Right lobe of liver (tissue), 6 donors: ENCODE measurements at regions of chr15 and their contacts with region 1.

Region 1: GRCh38 chr15:33699691-33700447 is 268.4 kb upstream of the CHRM5 start:
- DNase-seq: no peak
- ATAC-seq: no peak
- H3K4me3 ChIP-seq: no peak overlapping the region
- H3K27ac ChIP-seq: no peak overlapping the region
- H3K4me1 ChIP-seq: no peaks in the 10 kb centered on the region
- H3K27me3 ChIP-seq: no peaks in the 10 kb centered on the region
- CTCF ChIP-seq: peak in 1 of 4 donors; percentile 11
- POLR2A ChIP-seq: no peak

Region 2: DNA sequence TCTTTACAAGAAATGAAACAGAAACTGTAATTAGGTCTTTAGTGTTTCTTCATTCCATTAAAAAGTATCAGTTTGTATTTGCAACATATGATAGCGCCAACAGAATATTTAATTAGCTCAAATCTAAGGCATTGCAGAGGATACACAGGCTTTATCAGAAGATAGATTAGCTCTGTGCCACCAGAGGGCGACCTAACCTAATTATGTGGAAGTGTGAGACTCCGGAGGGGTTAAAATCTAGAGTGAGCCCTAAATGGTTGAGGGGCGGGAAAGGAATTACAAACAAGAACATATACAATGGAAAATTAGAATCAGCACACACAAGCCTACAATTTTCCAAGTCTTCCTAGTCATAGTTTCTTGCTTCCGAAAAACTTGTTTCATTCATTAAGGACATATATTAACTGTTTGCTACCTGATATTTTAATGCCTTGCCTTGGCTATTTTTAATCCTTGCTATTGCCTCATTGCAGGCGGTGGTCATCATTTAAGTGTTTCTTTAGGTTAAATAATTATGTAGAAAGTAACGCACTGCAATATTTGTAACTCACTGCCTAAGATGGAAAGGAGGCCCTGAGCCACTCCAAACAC is 407.1 kb before region 1 on chr15:
- intact Hi-C with region 1: loop called in 1 of 2 experiments (anchors 5 kb)
- DNase-seq: peak in 2 of 3 donors; percentile 56
- ATAC-seq: peak; percentile 70 to 80 (median 76)
- H3K4me3 ChIP-seq: no peak overlapping the region
- H3K27ac ChIP-seq: no peak overlapping the region
- H3K4me1 ChIP-seq: peaks cover 0 to 17% (median 0%) of the 10 kb centered on the region in 4 donors
- H3K27me3 ChIP-seq: no peaks in the 10 kb centered on the region
- CTCF ChIP-seq: peak; percentile 50 to 82 (median 74)
- POLR2A ChIP-seq: no peak

Region 3: DNA sequence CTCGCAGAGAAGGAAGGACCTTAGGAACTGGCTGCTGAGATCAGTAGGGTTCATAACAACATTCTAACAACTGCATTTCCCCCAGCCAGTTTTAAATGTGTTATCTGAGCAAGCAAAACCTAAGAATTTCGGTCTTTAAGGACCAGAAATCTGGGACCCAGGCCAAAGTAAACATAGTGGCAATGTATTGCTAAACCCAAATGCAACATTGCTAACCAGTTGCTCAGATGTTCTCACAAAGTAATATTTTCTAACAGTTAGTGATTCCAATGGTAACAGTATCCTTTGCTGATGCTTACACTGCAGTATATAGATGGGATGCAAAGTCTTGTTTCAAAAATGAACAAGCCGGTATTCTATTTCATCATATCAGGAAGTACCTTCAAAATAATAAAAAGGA is 134.8 kb before region 1 on chr15:
- intact Hi-C with region 1: no loop called
- DNase-seq: no peak
- ATAC-seq: no peak
- H3K4me3 ChIP-seq: no peak overlapping the region
- H3K27ac ChIP-seq: no peak overlapping the region
- H3K4me1 ChIP-seq: no peaks in the 10 kb centered on the region
- H3K27me3 ChIP-seq: no peaks in the 10 kb centered on the region
- CTCF ChIP-seq: no peak
- POLR2A ChIP-seq: no peak